ENCODE measurements at regions of chr13 and their contacts with region 1.

Region 1: DNA sequence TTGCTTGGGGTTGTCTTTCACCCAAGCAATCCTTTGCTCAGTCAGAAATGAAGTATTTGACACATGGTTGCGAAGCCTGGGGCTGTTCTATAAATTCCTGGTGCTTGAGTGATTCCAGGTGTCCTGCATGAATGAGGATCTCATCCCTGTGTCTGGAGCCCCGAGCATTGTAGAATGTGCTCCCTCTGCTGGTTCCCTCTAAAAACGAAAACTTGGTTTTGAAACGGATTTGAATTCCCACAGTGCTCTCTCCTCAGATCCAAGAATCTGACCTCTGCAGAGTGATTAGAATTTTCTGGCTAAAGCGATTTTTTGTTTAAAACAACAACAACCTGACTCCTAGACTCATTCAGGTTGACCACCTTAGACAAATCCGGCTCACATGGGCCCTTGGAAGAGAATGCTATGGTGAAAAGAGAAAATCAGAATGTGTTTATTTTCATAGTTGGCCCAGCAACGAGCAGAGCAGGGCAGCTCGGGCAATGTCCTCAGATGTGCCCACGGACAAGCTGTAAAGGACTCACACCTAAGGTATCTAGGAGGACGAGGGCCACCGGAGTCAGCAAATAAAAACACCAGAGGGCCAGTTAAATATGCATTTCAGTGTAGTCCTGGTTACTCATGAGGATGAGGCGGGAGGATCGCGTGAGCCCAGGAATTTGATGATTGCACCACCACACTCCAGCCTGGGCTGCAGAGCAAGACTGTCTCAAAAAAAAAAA is 8.7 kb upstream of the ATP12A start:
- DNase-seq: peak; percentile 65
- H3K4me3 ChIP-seq: peak overlapping the region; percentile 44
- CTCF ChIP-seq: peak; percentile 72

Region 2: GRCh38 chr13:23794267-23795161 is 877.0 kb before region 1 on chr13:
- CTCF ChIA-PET with region 1: no interaction called
- POLR2A ChIA-PET with region 1: no interaction called
- DNase-seq: no peak
- H3K4me3 ChIP-seq: no peak overlapping the region
- CTCF ChIP-seq: no peak

Region 3: DNA sequence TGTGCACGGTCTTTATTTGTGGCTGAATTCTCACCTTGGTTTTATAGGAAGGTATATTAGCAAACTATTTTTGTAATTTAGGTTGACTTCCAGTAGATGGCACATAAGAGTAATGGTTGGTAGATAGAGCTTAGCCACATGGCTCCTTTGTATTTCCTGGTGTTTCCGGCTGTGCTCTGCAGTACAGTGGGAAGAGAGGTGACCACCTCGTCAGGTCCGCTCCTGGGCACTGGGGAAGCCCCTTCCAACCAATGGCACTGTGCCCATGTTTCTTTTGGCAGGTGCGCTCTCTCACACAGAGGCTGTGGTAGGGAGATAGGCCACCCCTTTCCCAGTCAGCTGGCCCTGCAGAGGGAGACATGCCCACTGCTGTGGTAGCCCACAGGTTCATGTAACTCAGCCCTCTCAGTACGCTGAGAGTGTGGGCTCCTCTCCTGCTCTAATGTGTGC is 65.6 kb before region 1 on chr13:
- CTCF ChIA-PET with region 1: interaction called, 30 read pairs
- POLR2A ChIA-PET with region 1: no interaction called
- DNase-seq: no peak
- H3K4me3 ChIP-seq: no peak overlapping the region
- CTCF ChIP-seq: peak; percentile 27

Region 4: DNA sequence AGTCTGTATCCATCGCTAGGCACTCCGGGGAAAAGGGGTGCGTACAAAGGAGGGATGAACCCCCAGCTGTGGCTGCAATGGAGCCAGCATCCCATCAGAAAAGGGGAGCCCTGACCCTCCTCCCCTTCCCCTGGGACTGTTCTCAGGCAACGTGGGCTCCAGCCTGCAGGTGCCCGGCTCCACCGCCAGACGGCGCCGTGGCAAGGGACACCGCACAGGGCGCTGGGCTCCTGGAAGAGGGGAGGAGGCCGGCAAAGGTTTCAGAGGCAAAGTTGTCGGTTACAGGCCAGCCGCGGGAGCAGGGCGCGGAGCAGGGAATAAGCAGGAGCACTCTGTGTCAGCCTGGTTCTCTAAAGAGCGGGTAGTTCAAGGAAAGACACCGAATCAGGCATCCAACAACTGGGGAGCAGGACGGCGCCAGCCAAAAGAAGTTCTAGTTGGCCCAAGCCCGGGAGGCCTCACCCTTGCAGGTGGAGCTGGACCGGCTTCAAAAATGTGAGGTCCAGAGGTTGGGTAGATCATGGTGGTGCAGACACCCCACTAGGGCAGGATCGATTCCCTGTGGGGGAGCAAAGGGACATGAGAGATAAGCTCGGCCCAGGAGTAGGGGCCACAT is 44.3 kb before region 1 on chr13:
- CTCF ChIA-PET with region 1: interaction called, 29 read pairs
- POLR2A ChIA-PET with region 1: no interaction called
- DNase-seq: no peak
- H3K4me3 ChIP-seq: no peak overlapping the region
- CTCF ChIP-seq: peak; percentile 88

Region 5: GRCh38 chr13:24683838-24684599 is 12.5 kb after region 1 on chr13:
- CTCF ChIA-PET with region 1: interaction called, 22 read pairs
- POLR2A ChIA-PET with region 1: no interaction called
- DNase-seq: no peak
- H3K4me3 ChIP-seq: no peak overlapping the region
- CTCF ChIP-seq: peak; percentile 73

Measured in AG04449 (cell line).